Cardiac septum (tissue), 1 donor: ENCODE measurements at regions of chr17 and their contacts with region 1.

Region 1: DNA sequence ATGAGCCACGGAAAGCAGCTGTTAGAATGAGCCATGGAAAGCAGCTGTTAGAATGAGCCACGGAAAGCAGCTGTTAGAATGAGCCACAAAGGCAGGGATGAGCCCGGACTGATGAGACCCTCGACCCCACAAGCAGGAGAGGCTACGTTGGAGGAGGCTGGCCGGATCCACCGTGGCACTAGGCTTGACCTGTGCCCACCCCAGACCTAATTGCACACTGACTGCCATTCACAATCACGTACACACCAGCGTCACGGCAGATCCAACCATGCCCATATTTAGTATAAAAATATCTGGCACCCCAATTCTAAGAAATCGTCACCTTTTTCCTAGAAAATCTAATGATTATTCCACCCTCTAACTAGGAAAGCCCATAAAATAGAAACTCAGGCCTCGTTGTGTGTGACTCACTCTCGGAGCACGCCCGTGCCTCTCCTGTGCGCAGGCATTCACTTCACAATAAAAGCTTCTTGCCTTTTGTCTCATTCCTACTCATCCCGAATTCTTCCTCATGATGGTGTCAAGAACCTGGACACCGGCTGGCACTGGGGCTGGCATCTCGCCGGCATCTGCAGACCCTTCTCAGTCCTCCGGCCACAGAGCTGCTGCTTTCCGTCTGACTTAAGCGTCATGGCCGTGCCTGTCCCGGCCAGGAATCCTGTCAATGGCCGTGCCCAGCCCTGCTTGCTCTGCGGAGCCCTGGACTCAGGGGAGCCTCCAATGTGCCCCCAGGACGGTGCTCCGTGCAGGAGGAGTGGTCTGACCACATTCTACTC is 5.5 kb upstream of the SECTM1 start:
- DNase-seq: no peak

Region 2: DNA sequence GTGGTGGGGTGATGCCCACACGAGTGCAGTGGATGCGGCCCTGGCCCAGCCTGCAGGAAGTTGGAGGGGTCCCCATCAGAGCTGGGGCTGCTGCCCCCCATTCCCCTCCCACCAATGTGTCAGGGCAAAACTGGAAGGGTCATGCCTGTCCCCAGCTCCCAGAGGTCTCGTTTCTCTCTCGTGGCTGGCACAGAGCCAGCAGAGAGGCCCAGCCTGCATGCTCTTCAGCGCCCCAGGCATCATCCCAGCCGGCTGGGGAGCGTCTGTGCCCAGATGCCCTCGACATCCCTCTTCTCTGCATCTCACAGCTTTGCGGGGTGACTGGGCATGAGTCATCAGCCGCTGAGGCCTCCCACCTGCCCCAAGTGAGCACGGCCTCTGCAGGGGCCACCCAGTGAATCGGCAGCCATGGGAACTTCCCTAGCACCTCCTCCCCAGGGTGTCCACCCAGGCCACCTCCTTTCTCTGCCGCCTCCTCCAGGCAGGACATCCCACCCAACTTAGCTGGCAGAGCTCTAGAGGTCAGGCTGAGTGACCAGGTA is 55.8 kb before region 1 on chr17:
- intact Hi-C with region 1: no loop called
- DNase-seq: no peak

Region 3: GRCh38 chr17:82302991-82303943 is 35.8 kb before region 1 on chr17:
- intact Hi-C with region 1: no loop called
- DNase-seq: no peak

Region 4: DNA sequence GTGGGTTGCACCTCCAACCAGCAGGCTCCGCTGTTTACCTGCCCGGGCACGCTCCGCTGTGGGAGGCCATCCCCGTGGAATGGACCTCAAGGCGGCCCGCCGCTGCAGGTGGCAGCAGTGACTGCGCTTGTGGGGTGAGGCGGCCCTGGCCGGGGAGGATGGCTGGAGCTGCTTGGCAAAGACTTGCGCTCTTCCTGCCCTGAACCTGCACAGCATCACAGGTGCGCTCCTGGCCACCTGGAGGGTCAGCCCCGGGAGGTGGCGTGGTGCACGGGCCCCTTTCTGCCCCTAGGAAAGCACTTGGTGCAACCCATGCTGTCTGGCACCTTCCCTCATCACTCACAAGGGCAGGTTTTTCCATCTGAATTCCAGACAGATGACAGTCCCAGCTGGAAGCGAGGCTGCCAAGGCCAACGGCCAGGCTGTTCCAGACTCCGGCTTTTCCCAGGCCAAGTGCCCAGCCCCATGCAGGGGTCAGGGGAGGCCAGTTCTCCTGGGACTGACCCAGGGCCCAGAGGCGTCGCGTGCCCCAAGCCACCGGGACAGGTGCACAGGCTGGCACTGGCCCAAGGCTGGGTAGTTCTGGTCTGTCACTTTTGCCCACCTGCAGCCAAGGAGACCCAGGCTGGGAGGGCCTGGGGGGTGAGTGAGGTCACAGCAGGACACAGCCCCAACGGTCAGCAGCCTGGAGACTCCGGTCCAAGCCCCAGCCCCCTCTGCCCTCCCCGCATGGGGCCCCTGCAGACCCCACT is 45.9 kb after region 1 on chr17:
- intact Hi-C with region 1: no loop called
- DNase-seq: no peak

Region 5: GRCh38 chr17:82592767-82593589 is 253.9 kb after region 1 on chr17:
- intact Hi-C with region 1: loop called (anchors 5 kb)
- DNase-seq: peak; percentile 84